CD8-positive, alpha-beta memory T cell (primary cell): ENCODE measurements at regions of chr7 and their contacts with region 1.

Region 1: DNA sequence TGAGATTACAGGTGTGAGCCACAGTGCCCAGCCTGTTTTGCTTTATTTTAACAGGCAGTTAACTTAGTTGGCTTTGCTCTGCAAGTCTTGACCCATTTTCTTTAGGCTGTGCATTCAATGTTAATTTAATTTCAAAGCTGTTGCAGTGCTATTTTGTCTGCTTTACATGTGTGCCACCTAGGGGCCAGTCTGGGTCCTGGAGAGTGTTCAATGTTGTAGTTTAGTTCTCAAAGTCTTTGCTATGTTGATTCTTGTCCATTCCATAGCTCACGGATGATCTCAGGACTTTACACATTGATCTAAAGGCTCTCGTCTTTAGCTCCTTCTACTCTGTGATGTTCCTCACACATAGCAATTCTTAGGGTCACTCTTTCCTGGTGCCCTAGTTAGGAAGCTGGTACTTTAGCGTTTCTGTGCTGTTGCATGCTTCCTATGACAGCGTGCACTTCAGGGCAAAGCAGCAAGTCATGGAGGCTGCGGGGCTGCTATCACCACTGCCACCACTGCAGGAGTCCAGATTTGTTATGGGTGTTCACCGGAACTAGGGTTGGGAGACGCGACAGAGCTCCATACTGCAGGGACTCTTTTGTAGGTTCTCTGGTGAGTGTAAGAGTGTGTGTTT is 16.4 kb upstream of the ABCA13 start:
- DNase-seq: peak in 4 of 5 donors; percentile 14 to 51 (median 22)
- H3K4me3 ChIP-seq: no peak overlapping the region
- H3K4me3 Mint-ChIP-seq: no peak overlapping the region
- H3K27ac ChIP-seq: no peak overlapping the region
- H3K27ac Mint-ChIP-seq: no peak overlapping the region
- H3K4me1 ChIP-seq: no peaks in the 10 kb centered on the region
- H3K4me1 Mint-ChIP-seq: no peaks in the 10 kb centered on the region
- H3K27me3 ChIP-seq: peaks cover 4% of the 10 kb centered on the region
- H3K27me3 Mint-ChIP-seq: peaks cover 6 to 30% of the 10 kb centered on the region in 2 donors

Region 2: GRCh38 chr7:47945261-47946001 is 209.5 kb before region 1 on chr7:
- CTCF ChIA-PET with region 1: interaction called, 18 read pairs
- POLR2A ChIA-PET with region 1: no interaction called
- DNase-seq: peak; percentile 43 to 74 (median 59)
- H3K4me3 ChIP-seq: no peak overlapping the region
- H3K4me3 Mint-ChIP-seq: no peak overlapping the region
- H3K27ac ChIP-seq: no peak overlapping the region
- H3K27ac Mint-ChIP-seq: no peak overlapping the region
- H3K4me1 ChIP-seq: no peaks in the 10 kb centered on the region
- H3K4me1 Mint-ChIP-seq: no peaks in the 10 kb centered on the region
- H3K27me3 ChIP-seq: no peaks in the 10 kb centered on the region
- H3K27me3 Mint-ChIP-seq: peaks cover 0 to 3% of the 10 kb centered on the region in 2 donors

Region 3: DNA sequence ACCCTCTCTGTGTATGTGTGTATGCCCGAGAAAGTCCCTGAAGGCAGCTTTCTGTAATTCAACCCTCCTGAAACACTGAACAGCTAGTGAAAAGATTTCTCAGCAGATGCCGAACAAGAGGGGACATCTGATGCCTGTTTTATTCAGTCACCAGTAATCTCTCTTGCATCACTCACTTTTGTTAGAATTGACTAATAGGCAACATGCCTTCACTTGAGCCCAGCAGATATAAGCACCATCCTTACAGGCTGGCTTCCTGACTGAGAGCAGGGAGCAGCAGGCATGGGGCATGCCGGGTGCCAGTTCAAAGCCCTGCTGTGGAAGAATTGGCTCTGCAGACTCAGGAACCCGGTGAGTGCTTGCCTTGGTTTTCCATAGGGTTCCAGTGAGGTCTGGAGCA is 16.3 kb after region 1 on chr7 and contains the start of gene ABCA13:
- CTCF ChIA-PET with region 1: no interaction called
- POLR2A ChIA-PET with region 1: no interaction called
- DNase-seq: no peak
- H3K4me3 ChIP-seq: no peak within 1 kb of the TSS
- H3K4me3 Mint-ChIP-seq: no peak within 1 kb of the TSS
- H3K27ac ChIP-seq: no peak within 1 kb of the TSS
- H3K27ac Mint-ChIP-seq: no peak within 1 kb of the TSS
- H3K4me1 ChIP-seq: no peaks in the 10 kb centered on the region
- H3K4me1 Mint-ChIP-seq: no peaks in the 10 kb centered on the region
- H3K27me3 ChIP-seq: no peaks in the 10 kb centered on the region
- H3K27me3 Mint-ChIP-seq: peaks cover 3 to 29% of the 10 kb centered on the region in 2 donors
- total RNA-seq, gene ABCA13: not detected

Region 4: DNA sequence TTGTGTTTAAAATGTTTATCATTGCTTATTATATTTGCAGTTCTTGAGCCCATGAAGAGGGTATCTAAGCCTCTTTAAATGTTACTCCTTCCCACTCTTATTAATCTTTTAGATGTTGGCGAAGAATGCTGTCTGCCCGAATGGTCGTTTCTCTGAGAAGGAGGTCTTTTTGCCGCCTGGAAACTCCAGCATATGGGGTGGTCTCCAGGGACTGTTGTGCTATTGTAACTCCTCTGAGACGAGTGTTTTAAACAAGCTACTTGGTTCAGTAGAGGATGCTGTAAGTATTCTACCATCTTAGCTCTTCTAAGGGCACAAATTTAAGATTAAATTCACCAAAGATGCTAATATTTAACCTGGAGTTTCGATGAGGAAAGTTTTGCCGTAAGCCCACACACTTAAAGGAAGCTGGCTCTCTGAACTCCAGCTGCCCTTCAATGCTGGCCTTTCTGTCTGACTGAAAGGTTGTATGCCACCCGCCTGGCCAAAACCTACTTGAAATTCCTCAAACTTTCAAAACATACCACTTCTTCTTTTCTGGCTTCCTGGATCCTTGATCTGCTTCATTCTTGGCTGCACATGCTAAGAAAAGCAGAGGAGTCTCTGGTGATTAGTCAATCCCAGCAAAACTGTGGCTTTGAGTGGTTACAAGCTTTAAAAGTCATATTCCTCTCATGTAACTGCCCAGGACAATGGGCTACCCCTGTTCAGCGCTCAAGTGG is 91.0 kb after region 1 on chr7:
- CTCF ChIA-PET with region 1: no interaction called
- POLR2A ChIA-PET with region 1: no interaction called
- DNase-seq: no peak
- H3K4me3 ChIP-seq: no peak overlapping the region
- H3K4me3 Mint-ChIP-seq: no peak overlapping the region
- H3K27ac ChIP-seq: no peak overlapping the region
- H3K27ac Mint-ChIP-seq: no peak overlapping the region
- H3K4me1 ChIP-seq: no peaks in the 10 kb centered on the region
- H3K4me1 Mint-ChIP-seq: no peaks in the 10 kb centered on the region
- H3K27me3 ChIP-seq: no peaks in the 10 kb centered on the region
- H3K27me3 Mint-ChIP-seq: peaks cover 6 to 10% of the 10 kb centered on the region in 2 donors